ENCODE measurements at regions of chr16 and their contacts with region 1.

Region 1: DNA sequence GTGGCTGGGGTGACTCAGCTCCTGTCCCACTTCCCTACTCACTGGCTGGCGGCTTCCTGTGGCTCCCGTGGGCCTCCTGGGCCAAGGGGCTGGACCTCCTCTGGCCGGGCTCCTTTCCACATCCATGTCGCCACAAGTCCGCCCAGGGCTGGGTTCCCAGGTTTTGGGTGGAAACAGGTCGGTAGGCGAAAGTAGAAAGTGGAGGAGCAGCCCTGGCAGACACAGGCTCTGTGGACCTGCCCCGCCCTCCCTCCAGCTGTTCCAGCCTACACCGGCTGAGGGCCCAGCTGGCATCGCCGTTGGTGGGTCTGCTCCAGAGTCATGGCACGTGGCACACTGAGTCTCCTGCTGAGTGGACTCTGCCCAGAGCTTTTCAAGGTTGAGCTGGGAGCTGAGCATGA is 28.7 kb downstream of the GSE1 start:
- DNase-seq: no peak
- H3K4me3 Mint-ChIP-seq: no peak overlapping the region
- H3K27ac Mint-ChIP-seq: no peak overlapping the region
- H3K4me1 Mint-ChIP-seq: no peaks in the 10 kb centered on the region
- H3K27me3 Mint-ChIP-seq: no peaks in the 10 kb centered on the region

Region 2: DNA sequence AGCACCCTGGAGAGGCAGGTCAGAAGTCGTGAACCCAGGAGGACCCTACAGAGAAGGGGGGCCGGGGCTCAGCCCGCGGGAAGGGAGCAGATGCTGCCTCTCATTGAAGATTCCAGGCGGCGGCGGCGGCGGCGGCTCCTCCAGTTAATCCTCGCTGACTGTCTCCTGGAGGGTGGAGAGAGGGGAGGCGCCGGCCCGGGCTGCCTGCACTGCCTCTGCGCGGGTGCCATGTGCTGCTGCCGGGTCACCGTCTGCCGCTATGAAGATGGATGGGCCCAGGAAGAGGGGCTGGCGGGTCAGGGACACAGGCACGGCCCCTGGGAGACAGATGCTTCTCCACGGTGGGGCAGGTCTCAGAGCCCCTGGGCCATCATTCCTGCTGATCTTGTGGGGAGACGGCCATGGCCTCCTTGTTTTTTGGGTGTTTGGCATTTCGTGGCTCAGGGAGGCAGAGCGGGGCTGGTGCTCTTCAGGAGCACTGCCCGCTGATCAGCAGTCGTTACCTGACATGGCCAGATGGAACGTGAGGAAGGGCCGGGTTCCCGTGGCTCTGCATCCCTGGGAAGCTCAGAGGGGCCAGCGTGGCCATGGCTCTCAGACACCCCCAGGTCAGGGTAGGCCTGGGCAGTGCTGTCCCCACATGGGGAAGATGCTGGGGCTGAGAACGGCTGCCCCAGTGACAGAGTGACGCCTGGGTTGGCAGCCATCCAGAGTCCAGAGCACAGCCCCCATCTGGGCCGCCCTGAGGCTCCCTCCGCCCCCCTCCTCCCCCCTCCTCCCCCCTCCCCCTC is 10.8 kb after region 1 on chr16:
- CTCF ChIA-PET with region 1: no interaction called
- intact Hi-C with region 1: loop called (anchors 1 kb)
- DNase-seq: peak; percentile 14
- H3K4me3 Mint-ChIP-seq: no peak overlapping the region
- H3K27ac Mint-ChIP-seq: no peak overlapping the region
- H3K4me1 Mint-ChIP-seq: no peaks in the 10 kb centered on the region
- H3K27me3 Mint-ChIP-seq: no peaks in the 10 kb centered on the region

Measured in activated naive CD4-positive, alpha-beta T cell treated with anti-CD3 and anti-CD28 coated beads for 36 hours (primary cell).